ENCODE measurements at regions of chr12 and their contacts with region 1.

Region 1: GRCh38 chr12:50597200-50598195 is 92.7 kb downstream of the DIP2B start:
- DNase-seq: peak; percentile 26
- H3K4me3 Mint-ChIP-seq: peak overlapping the region; percentile 28
- H3K27ac Mint-ChIP-seq: peak overlapping the region; percentile 35
- H3K4me1 Mint-ChIP-seq: peaks cover 31% of the 10 kb centered on the region
- H3K27me3 Mint-ChIP-seq: no peaks in the 10 kb centered on the region

Region 2: DNA sequence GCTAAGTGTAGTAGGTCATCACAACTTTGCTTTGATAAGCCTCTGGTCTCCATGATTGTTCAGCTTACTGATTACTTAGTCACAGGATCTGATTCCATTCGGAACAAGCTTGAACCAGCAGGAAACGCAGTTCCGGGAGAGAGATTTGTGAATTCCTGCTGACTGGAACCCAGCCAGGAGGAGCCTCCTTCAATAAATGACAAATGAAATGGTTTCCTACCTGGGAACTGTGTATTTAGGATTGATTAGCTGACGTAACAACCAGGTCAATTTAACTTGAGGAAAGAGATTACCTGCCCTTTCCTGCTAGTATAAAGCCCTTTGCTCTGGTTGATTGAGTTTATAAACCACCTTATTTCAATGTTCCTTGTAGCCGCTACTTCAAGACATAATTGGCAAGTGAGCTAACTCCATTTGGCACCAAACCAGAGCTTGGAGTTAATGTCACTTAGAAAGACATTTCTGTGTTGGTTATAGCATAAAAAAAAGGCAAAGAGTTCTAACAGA is 1093.8 kb before region 1 on chr12:
- intact Hi-C with region 1: no loop called
- DNase-seq: no peak
- H3K4me3 Mint-ChIP-seq: no peak overlapping the region
- H3K27ac Mint-ChIP-seq: no peak overlapping the region
- H3K4me1 Mint-ChIP-seq: peaks cover 5% of the 10 kb centered on the region
- H3K27me3 Mint-ChIP-seq: no peaks in the 10 kb centered on the region

Region 3: DNA sequence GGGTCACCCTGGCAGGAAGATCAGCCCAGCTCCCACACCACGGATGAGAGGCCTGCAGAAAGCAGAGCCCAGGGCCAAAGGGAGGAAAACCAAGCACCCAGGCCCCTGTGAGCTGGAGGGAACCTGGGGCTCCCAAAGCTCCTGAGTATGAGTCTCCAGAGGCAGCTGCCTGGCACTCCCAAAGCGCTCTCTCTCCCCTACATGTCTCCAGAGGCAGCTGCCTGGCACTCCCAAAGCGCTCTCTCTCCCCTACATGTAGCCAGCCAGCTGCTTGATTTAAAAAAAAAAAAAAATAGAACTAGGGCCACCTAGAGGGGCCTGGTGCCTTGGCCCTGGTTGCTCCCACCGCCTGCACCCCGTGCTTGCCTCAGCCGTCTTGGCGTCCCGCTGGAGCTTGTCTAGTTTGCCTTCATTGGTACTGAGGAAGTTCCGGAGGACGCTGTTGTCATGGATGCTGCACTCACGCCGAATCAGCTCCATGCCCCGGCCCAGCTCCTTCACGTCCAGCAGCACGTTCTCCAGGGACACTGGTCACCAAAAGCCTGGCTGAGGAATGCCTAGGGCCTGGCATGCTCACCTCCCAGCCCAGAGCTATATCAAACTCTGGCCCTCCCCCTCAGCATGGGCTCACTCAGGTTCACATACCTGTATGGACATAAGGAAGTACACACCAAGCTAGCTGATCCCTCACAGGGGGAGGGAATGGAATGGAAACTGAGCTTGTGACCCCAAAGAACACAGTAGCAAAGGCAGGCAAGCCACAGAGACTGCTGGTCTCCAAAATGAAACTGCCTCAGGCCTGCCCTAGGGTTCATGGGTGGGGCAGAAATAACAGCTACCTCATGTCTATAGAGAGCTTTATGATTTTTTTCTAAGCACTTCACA is 949.4 kb before region 1 on chr12:
- intact Hi-C with region 1: no loop called
- DNase-seq: no peak
- H3K4me3 Mint-ChIP-seq: no peak overlapping the region
- H3K27ac Mint-ChIP-seq: no peak overlapping the region
- H3K4me1 Mint-ChIP-seq: peaks cover 32% of the 10 kb centered on the region
- H3K27me3 Mint-ChIP-seq: no peaks in the 10 kb centered on the region

Region 4: DNA sequence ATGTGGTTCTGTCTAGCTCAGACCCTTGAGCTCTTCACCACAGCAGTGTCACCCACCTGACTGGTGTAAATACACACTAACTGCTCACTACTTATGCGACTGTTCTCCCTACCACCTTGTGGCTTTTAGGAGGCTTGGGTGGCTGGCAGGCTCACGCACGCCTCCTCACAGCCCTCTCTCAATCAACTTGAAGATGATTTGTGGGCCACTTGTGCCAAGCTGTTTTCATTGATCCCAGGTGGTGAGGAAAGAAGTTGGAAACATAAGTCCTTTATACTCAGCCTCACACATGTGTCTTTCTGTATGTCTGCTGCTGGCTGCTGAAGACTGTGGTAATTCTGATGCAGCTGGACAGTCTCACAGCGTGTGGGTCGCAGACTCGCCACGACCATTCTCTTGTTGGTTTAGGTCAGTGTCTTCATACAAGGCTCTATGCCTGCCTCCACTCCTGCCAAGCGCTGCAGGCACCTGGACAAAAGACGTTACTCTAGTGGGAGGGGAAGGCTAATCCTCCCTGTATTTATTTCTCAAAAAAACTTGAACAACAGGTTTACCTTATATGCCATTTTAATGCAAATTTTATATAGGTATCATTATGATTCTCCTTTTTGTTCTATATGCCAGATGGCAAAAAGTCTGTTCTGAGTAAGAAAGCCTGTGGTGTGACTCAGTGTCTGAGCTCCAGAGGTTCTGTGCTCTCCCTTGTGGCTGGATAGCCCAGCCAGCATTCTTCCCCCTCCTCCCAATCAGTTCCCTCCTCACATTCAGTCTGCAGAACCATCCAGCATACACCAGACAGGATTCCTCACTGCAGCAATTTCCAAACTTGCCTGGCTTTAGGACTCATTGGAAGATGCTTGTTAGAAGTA is 22.8 kb after region 1 on chr12:
- intact Hi-C with region 1: loop called (anchors 2 kb)
- DNase-seq: no peak
- H3K4me3 Mint-ChIP-seq: no peak overlapping the region
- H3K27ac Mint-ChIP-seq: no peak overlapping the region
- H3K4me1 Mint-ChIP-seq: peaks cover 32% of the 10 kb centered on the region
- H3K27me3 Mint-ChIP-seq: no peaks in the 10 kb centered on the region

Region 5: GRCh38 chr12:50637870-50638481 is 40.5 kb after region 1 on chr12:
- intact Hi-C with region 1: loop called (anchors 5 kb)
- DNase-seq: no peak
- H3K4me3 Mint-ChIP-seq: no peak overlapping the region
- H3K27ac Mint-ChIP-seq: peak overlapping the region; percentile 31
- H3K4me1 Mint-ChIP-seq: peaks cover 44% of the 10 kb centered on the region
- H3K27me3 Mint-ChIP-seq: no peaks in the 10 kb centered on the region

Measured in activated T-helper 1 cell treated with anti-CD3 and anti-CD28 coated beads, Interleukin-12 subunit alpha, Interleukin-12 subunit beta, Interleukin-2, Interleukin-4 antibody, amounts not matched to agents 30 ng/mL and 10 ng/mL and 1 ng/mL, durations not matched to agents 14 hours and 24 hours and 36 hours (primary cell).